Activated B cell treated with CpG ODN at 0.5 μM for 24 hours (primary cell): ENCODE measurements at regions of chr2 and their contacts with region 1.

Region 1: GRCh38 chr2:74031221-74031620 is 46.5 kb downstream of the TET3 start:
- DNase-seq: no peak
- ATAC-seq: no peak
- H3K4me3 Mint-ChIP-seq: peak overlapping the region; percentile 90
- H3K27ac Mint-ChIP-seq: peak overlapping the region; percentile 99
- H3K4me1 Mint-ChIP-seq: peaks cover 84% of the 10 kb centered on the region
- H3K27me3 Mint-ChIP-seq: no peaks in the 10 kb centered on the region
- CTCF ChIP-seq: no peak

Region 2: GRCh38 chr2:74080346-74080745 is 49.1 kb after region 1 on chr2:
- CTCF ChIA-PET with region 1: interaction called, 3 read pairs
- POLR2A ChIA-PET with region 1: interaction called, 5 read pairs
- intact Hi-C with region 1: loop called (anchors 2 kb)
- DNase-seq: no peak
- ATAC-seq: peak; percentile 28
- H3K4me3 Mint-ChIP-seq: no peak overlapping the region
- H3K27ac Mint-ChIP-seq: peak overlapping the region; percentile 67
- H3K4me1 Mint-ChIP-seq: peaks cover 22% of the 10 kb centered on the region
- H3K27me3 Mint-ChIP-seq: no peaks in the 10 kb centered on the region
- CTCF ChIP-seq: no peak